Tibial artery (tissue), 4 donors: ENCODE measurements at regions of chr22 and their contacts with region 1.

Region 1: DNA sequence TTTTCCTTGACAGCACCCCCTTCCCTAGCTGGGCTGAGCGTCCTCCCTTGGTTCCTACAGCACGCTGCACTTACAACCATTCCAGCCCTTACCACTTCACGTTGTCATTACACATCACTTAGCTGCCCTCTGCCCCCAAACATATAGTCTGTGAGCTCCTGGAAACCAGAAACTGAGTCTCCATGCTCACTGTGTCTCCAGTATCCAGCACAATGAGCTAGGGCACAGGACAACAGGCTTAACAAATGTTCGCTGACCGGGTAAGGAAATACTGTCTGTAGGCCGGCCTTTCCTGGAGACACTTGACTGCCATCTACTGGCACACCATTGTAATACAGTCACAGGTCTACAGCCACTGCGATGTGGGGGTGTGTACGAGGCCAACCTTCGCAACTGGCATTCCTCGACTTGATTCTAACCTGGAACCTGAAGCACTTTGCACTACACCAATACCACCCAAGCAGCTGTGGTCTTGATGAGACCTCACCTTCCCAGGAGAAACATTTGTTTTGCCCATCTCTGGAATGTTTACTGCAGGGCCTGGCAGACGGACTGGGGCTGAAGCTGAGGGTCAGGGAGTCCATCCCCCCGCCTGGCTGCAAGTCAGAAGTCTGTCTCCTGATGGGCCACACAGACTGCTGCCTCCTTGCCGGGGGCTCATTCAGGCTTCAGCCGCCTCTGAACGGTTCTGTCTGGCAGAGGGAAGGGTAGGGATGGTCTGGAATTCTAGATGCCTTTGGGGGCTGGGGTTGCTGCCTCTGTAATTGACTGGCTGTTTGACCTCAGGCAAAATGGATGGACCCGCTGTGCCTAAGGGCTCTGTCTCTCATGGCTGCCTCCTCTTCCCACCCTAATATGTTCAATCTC is 72.0 kb downstream of the SYN3 start:
- DNase-seq: peak; percentile 79 to 81
- H3K4me3 ChIP-seq: no peak overlapping the region
- H3K27ac ChIP-seq: no peak overlapping the region
- H3K4me1 ChIP-seq: peaks cover 0 to 4% (median 0%) of the 10 kb centered on the region in 4 donors
- H3K27me3 ChIP-seq: peaks cover 0 to 4% of the 10 kb centered on the region in 2 donors
- CTCF ChIP-seq: peak; percentile 91 to 94

Region 2: GRCh38 chr22:32528984-32529982 is 456.8 kb before region 1 on chr22:
- intact Hi-C with region 1: loop called (anchors 5 kb)
- DNase-seq: peak; percentile 91 to 92
- H3K4me3 ChIP-seq: peak overlapping the region in 1 of 2 donors; percentile 3
- H3K27ac ChIP-seq: peak overlapping the region; percentile 9 to 38
- H3K4me1 ChIP-seq: peaks cover 4 to 39% (median 24%) of the 10 kb centered on the region in 4 donors
- H3K27me3 ChIP-seq: peaks cover 0 to 10% of the 10 kb centered on the region in 2 donors
- CTCF ChIP-seq: peak; percentile 84 to 95

Region 3: GRCh38 chr22:32660292-32660691 is 325.8 kb before region 1 on chr22:
- intact Hi-C with region 1: loop called (anchors 5 kb)
- DNase-seq: peak; percentile 71 to 80
- H3K4me3 ChIP-seq: no peak overlapping the region
- H3K27ac ChIP-seq: no peak overlapping the region
- H3K4me1 ChIP-seq: peaks cover 0 to 8% (median 2%) of the 10 kb centered on the region in 4 donors
- H3K27me3 ChIP-seq: no peaks in the 10 kb centered on the region
- CTCF ChIP-seq: peak; percentile 57 to 79

Region 4: GRCh38 chr22:32823024-32823730 is 163.0 kb before region 1 on chr22:
- intact Hi-C with region 1: no loop called
- DNase-seq: peak in 1 of 2 donors; percentile 53
- H3K4me3 ChIP-seq: no peak overlapping the region
- H3K27ac ChIP-seq: no peak overlapping the region
- H3K4me1 ChIP-seq: peaks cover 0 to 81% (median 37%) of the 10 kb centered on the region in 4 donors
- H3K27me3 ChIP-seq: no peaks in the 10 kb centered on the region
- CTCF ChIP-seq: no peak

Region 5: DNA sequence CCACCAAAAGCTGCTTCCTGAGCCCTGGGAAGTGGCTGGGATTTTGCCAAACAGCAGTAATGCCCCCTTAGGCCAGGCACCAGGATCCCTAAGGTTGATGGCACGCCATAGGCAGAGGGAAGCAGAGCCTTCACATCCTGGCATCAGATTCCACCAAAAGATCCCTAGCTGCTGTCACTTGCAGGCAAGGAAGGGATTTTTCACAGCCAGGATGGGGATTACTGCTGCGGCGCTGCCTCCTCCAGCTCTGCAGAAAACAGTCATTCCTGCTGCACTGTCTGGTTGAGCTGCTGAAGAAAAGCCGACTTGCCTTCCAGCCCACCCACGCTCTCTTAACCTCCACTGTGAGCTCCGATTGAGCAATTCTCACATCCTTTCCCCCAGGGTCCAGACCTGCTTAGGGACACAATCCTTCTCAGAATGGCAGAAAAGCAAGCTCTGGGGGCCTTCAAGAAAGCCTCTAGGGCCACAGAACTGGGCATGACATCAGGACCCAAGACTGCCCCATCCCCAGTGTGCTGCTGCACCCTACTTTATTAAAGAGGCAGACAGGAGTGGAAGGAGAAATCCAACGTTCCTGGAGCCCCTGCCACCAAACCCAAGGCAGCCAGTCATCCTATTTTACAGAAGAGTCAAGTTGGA is 52.1 kb after region 1 on chr22:
- intact Hi-C with region 1: no loop called
- DNase-seq: no peak
- H3K4me3 ChIP-seq: no peak overlapping the region
- H3K27ac ChIP-seq: no peak overlapping the region
- H3K4me1 ChIP-seq: peaks cover 0 to 8% (median 0%) of the 10 kb centered on the region in 4 donors
- H3K27me3 ChIP-seq: peaks cover 0 to 47% of the 10 kb centered on the region in 2 donors
- CTCF ChIP-seq: no peak